HEK293 (cell line): ENCODE measurements at regions of chr12 and their contacts with region 1.

Region 1: GRCh38 chr12:57583008-57583831 is 7.8 kb upstream of the PIP4K2C start:
- H3K4me3 ChIP-seq: no peak overlapping the region
- H3K27ac ChIP-seq: no peak overlapping the region
- H3K4me1 ChIP-seq: no peaks in the 10 kb centered on the region
- CTCF ChIP-seq: peak; percentile 94

Region 2: DNA sequence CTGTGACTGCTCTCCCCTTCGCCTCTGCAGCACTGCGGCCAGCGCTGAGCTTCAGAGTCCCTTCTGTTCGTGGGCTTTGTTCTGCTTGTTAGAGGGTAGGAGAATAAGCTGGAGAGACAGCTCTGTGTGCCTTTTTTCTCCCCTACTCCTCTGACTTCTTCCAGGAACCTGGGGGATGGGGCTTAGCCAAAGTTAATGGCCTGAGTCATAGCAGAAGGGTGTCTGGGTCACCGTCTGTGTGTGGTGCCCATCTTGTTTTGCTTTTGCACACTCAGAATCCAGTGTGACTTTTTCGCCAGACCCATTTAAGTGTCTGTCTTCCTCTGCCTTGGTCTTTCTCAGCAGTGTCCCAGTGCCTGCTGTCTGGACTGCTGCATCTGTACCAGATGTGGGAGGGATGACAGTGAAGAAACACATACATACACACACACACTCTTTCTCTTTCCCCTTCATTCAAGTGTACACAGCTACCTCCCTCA is 30.3 kb before region 1 on chr12:
- CTCF ChIA-PET with region 1: interaction called, 11 read pairs
- POLR2A ChIA-PET with region 1: interaction called, 4 read pairs
- H3K4me3 ChIP-seq: no peak overlapping the region
- H3K27ac ChIP-seq: no peak overlapping the region
- H3K4me1 ChIP-seq: peaks cover 2% of the 10 kb centered on the region; the same call in 1 of the 2 replicates
- CTCF ChIP-seq: no peak

Region 3: DNA sequence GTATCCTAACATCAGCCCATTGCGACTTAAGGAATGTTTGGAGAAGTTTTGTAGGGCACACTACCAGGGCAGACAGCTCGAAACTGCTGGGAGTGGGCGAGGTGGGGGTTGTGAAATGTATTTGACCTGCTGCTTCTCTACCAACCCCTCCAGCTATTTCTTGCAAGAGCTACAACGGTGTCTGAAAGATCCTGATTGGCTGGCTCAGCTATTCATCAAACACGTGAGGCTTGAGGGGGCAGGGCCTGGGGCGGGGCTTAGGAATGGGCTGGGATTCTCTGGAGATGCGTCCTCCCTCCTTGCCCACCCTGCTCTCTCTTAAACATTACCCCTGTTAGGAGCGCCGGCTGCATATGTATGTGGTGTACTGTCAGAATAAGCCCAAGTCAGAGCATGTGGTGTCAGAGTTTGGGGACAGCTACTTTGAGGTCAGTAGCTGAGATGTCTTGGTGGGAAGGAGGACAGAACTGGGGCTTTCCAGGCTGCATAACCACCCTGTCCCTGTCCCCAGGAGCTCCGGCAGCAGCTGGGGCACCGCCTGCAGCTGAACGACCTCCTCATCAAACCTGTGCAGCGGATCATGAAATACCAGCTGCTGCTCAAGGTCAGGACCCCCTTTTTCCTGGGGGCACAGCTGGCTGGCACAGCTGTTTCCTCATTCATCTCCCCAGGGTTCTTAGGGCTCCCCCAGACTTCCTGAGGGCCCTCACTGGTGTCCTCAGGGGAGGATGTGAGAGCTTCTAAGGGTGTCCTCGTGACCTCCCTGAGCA is 31.1 kb after region 1 on chr12:
- CTCF ChIA-PET with region 1: interaction called, 113 read pairs
- POLR2A ChIA-PET with region 1: interaction called, 3 read pairs
- H3K4me3 ChIP-seq: no peak overlapping the region
- H3K27ac ChIP-seq: no peak overlapping the region
- H3K4me1 ChIP-seq: peaks cover 2% of the 10 kb centered on the region
- CTCF ChIP-seq: no peak

Region 4: GRCh38 chr12:57632694-57633477 is 49.7 kb after region 1 on chr12 and contains the start of gene B4GALNT1:
- CTCF ChIA-PET with region 1: interaction called, 31 read pairs
- POLR2A ChIA-PET with region 1: interaction called, 3 read pairs
- H3K4me3 ChIP-seq: peak within 1 kb of the TSS; percentile 47
- H3K27ac ChIP-seq: no peak within 1 kb of the TSS; the same call in 1 of the 2 replicates
- H3K4me1 ChIP-seq: no peaks in the 10 kb centered on the region
- CTCF ChIP-seq: peak; percentile 93

Region 5: GRCh38 chr12:57735952-57736740 is 152.9 kb after region 1 on chr12:
- CTCF ChIA-PET with region 1: interaction called, 35 read pairs
- POLR2A ChIA-PET with region 1: no interaction called
- H3K4me3 ChIP-seq: peak overlapping the region; percentile 27
- H3K27ac ChIP-seq: no peak overlapping the region
- H3K4me1 ChIP-seq: peaks cover 6% of the 10 kb centered on the region; the same call in 1 of the 2 replicates
- CTCF ChIP-seq: peak; percentile 77

Region 6: DNA sequence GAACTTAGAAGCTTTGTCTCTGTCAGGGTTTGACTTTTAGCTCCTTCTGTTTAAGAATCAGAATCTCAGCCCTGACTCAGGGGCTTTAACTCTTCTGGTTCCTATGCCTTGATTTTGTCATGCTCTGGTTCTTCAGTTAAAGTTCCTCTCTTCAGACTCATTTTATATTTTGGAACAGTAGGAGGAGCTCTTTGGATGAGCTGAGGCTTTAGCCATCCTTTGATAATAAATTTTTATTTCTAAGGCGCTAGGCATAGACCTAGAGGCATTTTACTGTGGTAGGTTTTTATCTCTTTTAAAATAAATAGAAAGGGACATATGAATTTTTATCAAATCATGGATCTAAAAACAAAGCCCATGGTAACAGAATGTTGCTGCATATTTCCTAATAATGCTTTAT is 409.8 kb after region 1 on chr12:
- CTCF ChIA-PET with region 1: no interaction called
- POLR2A ChIA-PET with region 1: no interaction called
- H3K4me3 ChIP-seq: no peak overlapping the region
- H3K27ac ChIP-seq: no peak overlapping the region
- H3K4me1 ChIP-seq: no peaks in the 10 kb centered on the region
- CTCF ChIP-seq: no peak